Breast epithelium (tissue), 4 donors: ENCODE measurements at regions of chr4 and their contacts with region 1.

Region 1: GRCh38 chr4:7962609-7963508 is 23.2 kb upstream of the AFAP1 start:
- DNase-seq: no peak
- H3K4me3 ChIP-seq: no peak overlapping the region
- H3K27ac ChIP-seq: no peak overlapping the region
- H3K4me1 ChIP-seq: peaks cover 0 to 7% of the 10 kb centered on the region in 2 donors
- H3K27me3 ChIP-seq: no peaks in the 10 kb centered on the region
- CTCF ChIP-seq: no peak
- POLR2A ChIP-seq: no peak

Region 2: DNA sequence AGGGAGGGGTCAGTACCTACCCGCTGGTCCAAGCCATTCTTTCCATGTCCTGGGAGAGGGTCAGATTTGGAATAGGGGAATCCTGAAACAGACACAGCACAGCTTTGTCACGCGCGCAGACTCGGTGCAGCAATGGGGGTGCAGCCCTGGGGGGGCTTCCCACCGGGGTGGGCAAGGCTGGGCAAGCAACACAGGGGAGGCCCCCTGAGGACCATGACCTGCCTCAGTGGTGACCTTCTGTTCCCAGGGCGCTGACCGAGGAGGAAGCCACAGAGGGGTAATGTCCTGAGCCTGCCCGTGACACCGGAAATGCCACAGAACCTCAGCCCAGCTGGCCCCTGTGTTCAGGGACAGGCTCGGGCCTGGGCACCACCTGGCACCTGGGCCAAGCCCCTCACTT is 30.0 kb after region 1 on chr4:
- intact Hi-C with region 1: loop called (anchors 1 kb)
- DNase-seq: no peak
- H3K4me3 ChIP-seq: no peak overlapping the region
- H3K27ac ChIP-seq: no peak overlapping the region
- H3K4me1 ChIP-seq: no peaks in the 10 kb centered on the region
- H3K27me3 ChIP-seq: no peaks in the 10 kb centered on the region
- CTCF ChIP-seq: no peak
- POLR2A ChIP-seq: no peak

Region 3: GRCh38 chr4:8101213-8102075 is 138.6 kb after region 1 on chr4:
- intact Hi-C with region 1: no loop called
- DNase-seq: peak in 1 of 2 donors; percentile 52
- H3K4me3 ChIP-seq: no peak overlapping the region
- H3K27ac ChIP-seq: peak overlapping the region in 1 of 2 donors; percentile 72
- H3K4me1 ChIP-seq: no peaks in the 10 kb centered on the region
- H3K27me3 ChIP-seq: no peaks in the 10 kb centered on the region
- CTCF ChIP-seq: no peak
- POLR2A ChIP-seq: no peak